ENCODE measurements at regions of chr12 and their contacts with region 1.

Region 1: GRCh38 chr12:11500178-11500860 is 105.0 kb upstream of the PRB2 start:
- DNase-seq: peak; percentile 92
- ATAC-seq: peak; percentile 96
- H3K4me3 Mint-ChIP-seq: no peak overlapping the region
- H3K27ac Mint-ChIP-seq: no peak overlapping the region
- H3K4me1 Mint-ChIP-seq: peaks cover 3% of the 10 kb centered on the region
- H3K27me3 Mint-ChIP-seq: peaks cover 18% of the 10 kb centered on the region

Region 2: DNA sequence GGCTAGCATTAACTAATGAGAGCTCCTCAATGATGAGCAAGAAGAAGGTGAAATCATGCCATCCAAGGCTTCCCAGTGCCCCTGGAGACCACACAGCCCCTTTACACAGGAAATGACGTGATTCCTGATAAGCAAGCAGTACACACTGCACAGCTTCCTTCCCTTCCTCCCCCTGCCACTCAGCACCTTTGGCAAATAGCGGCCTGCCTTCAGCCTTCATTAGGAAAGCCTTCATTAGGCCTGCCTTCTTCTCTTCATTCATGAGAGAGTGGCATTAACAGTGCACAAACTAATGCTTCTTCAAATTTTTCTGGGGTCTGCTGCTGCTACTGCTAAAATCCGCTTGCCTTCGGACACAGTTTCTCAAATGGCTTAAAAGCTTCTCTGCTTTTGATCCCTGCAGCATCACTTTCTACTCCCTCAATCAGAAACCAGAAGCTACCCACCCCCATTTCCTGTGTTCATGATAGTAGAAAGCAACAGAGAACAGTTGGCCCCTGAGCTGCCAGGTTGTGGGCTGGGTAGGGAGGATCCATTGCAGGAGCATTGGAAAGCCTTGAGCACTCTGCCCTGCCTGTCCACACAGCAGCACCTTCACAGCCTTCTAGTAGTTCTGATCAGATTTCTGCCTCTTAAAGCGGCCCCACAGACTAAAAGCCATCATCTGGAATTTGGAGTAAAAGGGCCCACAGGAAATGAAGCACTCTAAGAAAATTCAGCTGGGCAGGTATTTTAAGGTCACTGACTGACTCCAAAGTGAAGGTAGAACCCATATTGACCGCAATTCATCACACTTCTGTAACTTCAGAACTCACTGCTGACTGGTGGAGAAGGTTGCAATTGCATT is 45.4 kb after region 1 on chr12:
- CTCF ChIA-PET with region 1: interaction called, 3 read pairs
- POLR2A ChIA-PET with region 1: interaction called, 4 read pairs
- intact Hi-C with region 1: loop called in 1 of 2 experiments (anchors 1 kb)
- DNase-seq: peak; percentile 67
- ATAC-seq: peak; percentile 82
- H3K4me3 Mint-ChIP-seq: peak overlapping the region; percentile 53
- H3K27ac Mint-ChIP-seq: peak overlapping the region; percentile 92
- H3K4me1 Mint-ChIP-seq: peaks cover 59% of the 10 kb centered on the region
- H3K27me3 Mint-ChIP-seq: no peaks in the 10 kb centered on the region

Region 3: GRCh38 chr12:11555743-11556625 is 55.7 kb after region 1 on chr12:
- CTCF ChIA-PET with region 1: no interaction called
- POLR2A ChIA-PET with region 1: no interaction called
- intact Hi-C with region 1: no loop called
- DNase-seq: peak; percentile 43
- ATAC-seq: peak; percentile 62
- H3K4me3 Mint-ChIP-seq: peak overlapping the region; percentile 56
- H3K27ac Mint-ChIP-seq: peak overlapping the region; percentile 49
- H3K4me1 Mint-ChIP-seq: peaks cover 28% of the 10 kb centered on the region
- H3K27me3 Mint-ChIP-seq: no peaks in the 10 kb centered on the region

Region 4: GRCh38 chr12:12153596-12153995 is 653.3 kb after region 1 on chr12:
- CTCF ChIA-PET with region 1: no interaction called
- POLR2A ChIA-PET with region 1: no interaction called
- intact Hi-C with region 1: no loop called
- DNase-seq: no peak
- ATAC-seq: no peak
- H3K4me3 Mint-ChIP-seq: no peak overlapping the region
- H3K27ac Mint-ChIP-seq: no peak overlapping the region
- H3K4me1 Mint-ChIP-seq: no peaks in the 10 kb centered on the region
- H3K27me3 Mint-ChIP-seq: no peaks in the 10 kb centered on the region

Measured in activated CD4-positive, alpha-beta T cell treated with anti-CD3 and anti-CD28 coated beads for 36 hours (primary cell).